ENCODE measurements at regions of chr1 and their contacts with region 1.

Region 1: DNA sequence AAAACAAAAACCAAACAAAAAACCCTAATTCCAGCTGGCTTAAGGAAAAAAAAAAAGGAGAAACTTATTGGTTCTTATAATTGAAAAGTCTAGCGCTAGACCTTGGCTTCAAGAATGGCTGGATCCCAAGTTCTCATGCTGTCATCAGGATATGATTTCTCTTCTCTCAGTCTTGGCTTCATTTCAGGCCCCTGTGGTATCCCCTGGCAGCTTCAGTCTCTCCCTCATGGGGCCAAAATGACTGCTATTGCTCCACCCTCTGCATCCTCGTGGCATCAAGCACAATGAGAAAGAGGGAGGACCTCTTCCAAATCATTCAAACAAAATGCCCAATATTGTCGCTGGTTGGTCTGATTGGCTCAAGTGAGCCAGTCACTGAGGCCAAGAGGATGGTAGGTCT is 80.7 kb downstream of the GIPC2 start:
- DNase-seq: no peak
- ATAC-seq: no peak
- H3K4me3 ChIP-seq: no peak overlapping the region
- H3K4me3 Mint-ChIP-seq: no peak overlapping the region
- H3K27ac ChIP-seq: no peak overlapping the region
- H3K27ac Mint-ChIP-seq: no peak overlapping the region
- H3K4me1 ChIP-seq: no peaks in the 10 kb centered on the region
- H3K4me1 Mint-ChIP-seq: no peaks in the 10 kb centered on the region
- H3K27me3 ChIP-seq: peaks cover 0 to 5% (median 0%) of the 10 kb centered on the region in 4 experiments
- H3K27me3 Mint-ChIP-seq: no peaks in the 10 kb centered on the region
- CTCF ChIP-seq: no peak

Region 2: DNA sequence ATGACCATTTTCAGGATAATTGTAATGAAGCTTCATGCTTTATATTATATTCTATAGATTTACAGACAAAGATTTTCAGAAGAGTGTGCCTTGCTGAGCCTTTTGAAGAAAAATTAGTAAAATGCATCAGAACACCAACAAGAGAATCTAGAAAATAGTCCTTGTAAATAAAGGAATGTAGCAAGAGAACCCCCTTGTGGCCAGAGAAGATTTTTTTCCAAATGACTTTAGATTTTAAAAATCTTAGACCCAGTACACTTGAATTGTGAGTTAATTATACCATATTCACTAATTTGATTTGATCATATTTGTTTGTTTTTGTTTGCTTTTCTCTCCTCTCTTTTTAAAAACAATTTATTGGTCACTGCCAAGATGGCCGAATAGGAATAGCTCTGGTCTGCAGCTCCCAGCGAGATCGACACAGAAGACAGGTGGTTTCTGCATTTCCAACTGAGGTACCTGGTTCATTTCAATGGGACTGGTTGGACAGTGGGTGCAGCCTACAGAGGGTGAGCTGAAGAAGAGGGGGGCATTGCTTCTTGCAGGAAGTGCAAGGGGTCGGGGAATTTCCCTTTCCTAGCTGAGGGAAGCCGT is 480.9 kb after region 1 on chr1:
- CTCF ChIA-PET with region 1: interaction called, 19 read pairs
- POLR2A ChIA-PET with region 1: no interaction called
- intact Hi-C with region 1: loop called (anchors 2 kb)
- DNase-seq: no peak
- ATAC-seq: no peak
- H3K4me3 ChIP-seq: no peak overlapping the region
- H3K4me3 Mint-ChIP-seq: no peak overlapping the region
- H3K27ac ChIP-seq: no peak overlapping the region
- H3K27ac Mint-ChIP-seq: no peak overlapping the region
- H3K4me1 ChIP-seq: no peaks in the 10 kb centered on the region
- H3K4me1 Mint-ChIP-seq: no peaks in the 10 kb centered on the region
- H3K27me3 ChIP-seq: no peaks in the 10 kb centered on the region
- H3K27me3 Mint-ChIP-seq: peaks cover 3% of the 10 kb centered on the region
- CTCF ChIP-seq: no peak

Region 3: DNA sequence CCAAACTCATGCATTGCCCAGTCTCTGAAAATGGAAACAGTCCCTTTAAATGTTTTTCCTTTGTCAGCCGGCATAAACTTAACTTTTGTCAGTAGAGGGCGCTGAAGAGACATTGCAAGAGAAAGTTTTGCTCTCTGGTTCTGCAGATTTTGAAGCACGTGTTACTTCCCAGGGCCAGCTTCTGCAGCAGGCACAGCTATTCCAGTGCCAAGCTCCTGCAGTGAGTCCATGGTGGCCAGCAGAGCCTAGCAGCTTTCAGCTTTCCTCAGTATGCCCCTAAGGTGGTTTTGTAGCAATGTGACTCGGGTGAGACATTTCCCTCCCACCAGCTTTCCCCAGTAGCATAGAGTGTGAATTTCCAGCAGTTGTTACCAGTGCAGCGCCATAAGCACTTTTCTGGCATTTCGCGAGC is 491.1 kb after region 1 on chr1:
- CTCF ChIA-PET with region 1: interaction called, 4 read pairs
- POLR2A ChIA-PET with region 1: no interaction called
- intact Hi-C with region 1: loop called (anchors 2 kb)
- DNase-seq: peak; percentile 78
- ATAC-seq: peak; percentile 63
- H3K4me3 ChIP-seq: no peak overlapping the region
- H3K4me3 Mint-ChIP-seq: peak overlapping the region; percentile 27
- H3K27ac ChIP-seq: no peak overlapping the region
- H3K27ac Mint-ChIP-seq: no peak overlapping the region
- H3K4me1 ChIP-seq: peaks cover 18 to 24% of the 10 kb centered on the region in 2 donors
- H3K4me1 Mint-ChIP-seq: peaks cover 36% of the 10 kb centered on the region
- H3K27me3 ChIP-seq: no peaks in the 10 kb centered on the region
- H3K27me3 Mint-ChIP-seq: no peaks in the 10 kb centered on the region
- CTCF ChIP-seq: peak; percentile 86

Measured in B cell (primary cell).